ENCODE measurements at regions of chrX and their contacts with region 1.

Region 1: DNA sequence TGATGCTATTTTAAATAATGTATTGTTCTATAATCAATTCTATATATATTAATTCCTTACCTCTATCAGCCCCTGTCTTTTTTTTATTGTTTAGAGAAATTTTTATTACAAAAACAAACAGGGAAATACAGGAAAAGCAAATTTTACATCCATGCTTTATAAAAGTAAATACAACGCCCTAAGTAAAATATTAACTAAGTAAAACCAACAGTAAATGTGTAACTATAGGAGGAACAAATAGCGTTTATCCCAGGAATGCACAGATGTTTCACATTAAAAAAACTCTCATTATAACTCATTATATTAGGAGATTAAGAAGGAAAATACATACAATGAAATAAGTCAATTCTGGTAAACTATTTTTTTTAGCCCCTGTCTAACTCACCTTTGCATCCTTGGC is 8.2 kb upstream of the ITM2A start:
- DNase-seq: no peak
- H3K4me3 ChIP-seq: no peak overlapping the region
- H3K27ac ChIP-seq: no peak overlapping the region
- H3K4me1 ChIP-seq: no peaks in the 10 kb centered on the region
- H3K27me3 ChIP-seq: no peaks in the 10 kb centered on the region
- CTCF ChIP-seq: no peak
- EP300 ChIP-seq: no peak
- POLR2A ChIP-seq: no peak

Region 2: GRCh38 chrX:79477691-79478090 is 102.4 kb after region 1 on chrX:
- in situ Hi-C with region 1: loop called in 1 of 4 experiments (anchors 25 kb)
- intact Hi-C with region 1: no loop called
- DNase-seq: no peak
- H3K4me3 ChIP-seq: no peak overlapping the region
- H3K27ac ChIP-seq: no peak overlapping the region
- H3K4me1 ChIP-seq: no peaks in the 10 kb centered on the region
- H3K27me3 ChIP-seq: no peaks in the 10 kb centered on the region
- CTCF ChIP-seq: peak in 3 of 5 experiments; percentile 6 to 13 (median 7)
- EP300 ChIP-seq: no peak
- POLR2A ChIP-seq: no peak